CD4-positive, alpha-beta memory T cell (primary cell): ENCODE measurements at regions of chr17 and their contacts with region 1.

Region 1: DNA sequence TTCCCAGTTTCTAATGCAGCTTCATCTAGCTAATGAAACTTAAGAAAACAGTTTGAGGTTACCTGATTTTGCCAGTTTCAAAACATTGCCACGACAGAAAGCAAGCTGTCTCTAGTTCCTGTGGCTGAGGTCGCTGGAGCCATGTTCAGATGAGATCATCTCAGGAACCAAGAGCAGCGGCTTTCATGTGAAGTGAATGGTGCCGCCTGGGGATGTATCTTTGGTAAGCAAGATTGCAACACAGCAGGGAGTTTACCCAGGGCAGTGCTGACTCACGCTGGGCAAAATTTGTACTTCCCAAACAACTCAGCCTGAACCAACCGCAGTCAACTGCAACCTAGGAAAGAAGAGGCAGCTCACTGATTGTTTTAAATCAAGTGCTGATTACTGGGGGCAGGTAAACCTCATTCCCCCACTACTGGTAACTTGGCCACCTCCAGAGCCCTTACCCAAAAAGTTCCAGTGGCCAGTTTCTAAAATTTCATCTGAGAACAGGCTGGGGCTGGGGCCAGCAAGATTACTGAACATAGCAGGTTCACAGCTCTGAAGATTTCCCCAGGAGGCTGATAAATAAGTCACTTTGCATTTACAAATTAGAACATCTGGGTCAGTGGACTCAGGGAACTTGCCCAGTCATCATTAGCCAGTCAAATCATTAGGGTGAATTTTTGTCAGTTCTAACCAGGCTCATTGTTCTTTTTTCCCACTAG is at the start of gene RFFL:
- DNase-seq: peak; percentile 82 to 97 (median 85)
- H3K4me3 ChIP-seq: peak within 1 kb of the TSS in 1 of 2 donors; percentile 0
- H3K4me3 Mint-ChIP-seq: peak within 1 kb of the TSS; percentile 71 to 88 (median 82)
- H3K27ac ChIP-seq: peak within 1 kb of the TSS; percentile 62
- H3K27ac Mint-ChIP-seq: peak within 1 kb of the TSS; percentile 92 to 96 (median 94)
- H3K4me1 ChIP-seq: peaks cover 55% of the 10 kb centered on the region
- H3K4me1 Mint-ChIP-seq: peaks cover 43 to 77% (median 57%) of the 10 kb centered on the region in 4 donors
- H3K27me3 ChIP-seq: no peaks in the 10 kb centered on the region
- H3K27me3 Mint-ChIP-seq: no peaks in the 10 kb centered on the region
- total RNA-seq, gene RFFL: 72.1 to 82.3 TPM

Region 2: DNA sequence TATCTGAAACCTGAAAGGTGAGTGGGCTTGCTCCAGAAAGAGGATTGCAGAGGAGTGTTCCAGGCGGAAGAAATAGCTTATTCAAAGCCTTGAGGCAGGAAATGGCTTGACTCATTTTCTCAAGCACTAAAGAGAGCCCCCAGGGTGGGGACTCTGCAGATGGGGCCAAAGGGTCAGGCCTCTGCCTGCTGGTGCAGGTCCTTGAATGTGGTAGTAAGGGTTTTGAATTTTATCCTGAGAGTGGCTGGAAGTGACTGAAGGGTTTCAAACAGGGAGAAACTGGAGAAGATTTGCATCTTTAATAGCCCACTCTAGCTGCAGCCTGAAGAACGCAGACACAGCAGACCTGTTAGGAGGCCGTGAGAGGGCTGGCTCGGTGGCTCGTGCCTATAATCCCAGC is 246.8 kb before region 1 on chr17:
- CTCF ChIA-PET with region 1: no interaction called
- POLR2A ChIA-PET with region 1: no interaction called
- intact Hi-C with region 1: no loop called
- DNase-seq: no peak
- H3K4me3 ChIP-seq: no peak overlapping the region
- H3K4me3 Mint-ChIP-seq: no peak overlapping the region
- H3K27ac ChIP-seq: no peak overlapping the region
- H3K27ac Mint-ChIP-seq: no peak overlapping the region
- H3K4me1 ChIP-seq: no peaks in the 10 kb centered on the region
- H3K4me1 Mint-ChIP-seq: peaks cover 0 to 7% (median 6%) of the 10 kb centered on the region in 4 donors
- H3K27me3 ChIP-seq: no peaks in the 10 kb centered on the region
- H3K27me3 Mint-ChIP-seq: peaks cover 3 to 7% of the 10 kb centered on the region in 2 donors

Region 3: GRCh38 chr17:34961093-34961911 is 102.4 kb before region 1 on chr17 and contains the starts of genes CCT6B and ZNF830:
- CTCF ChIA-PET with region 1: no interaction called
- POLR2A ChIA-PET with region 1: interaction called, 8 read pairs
- intact Hi-C with region 1: loop called (anchors 1 kb)
- DNase-seq: peak; percentile 90 to 95 (median 92)
- H3K4me3 ChIP-seq: peak within 1 kb of the TSS; percentile 82 to 84
- H3K4me3 Mint-ChIP-seq: peak within 1 kb of the TSS; percentile 100
- H3K27ac ChIP-seq: peak within 1 kb of the TSS; percentile 86
- H3K27ac Mint-ChIP-seq: peak within 1 kb of the TSS; percentile 97 to 100 (median 100)
- H3K4me1 ChIP-seq: peaks cover 20% of the 10 kb centered on the region
- H3K4me1 Mint-ChIP-seq: peaks cover 17 to 38% (median 27%) of the 10 kb centered on the region in 4 donors
- H3K27me3 ChIP-seq: no peaks in the 10 kb centered on the region
- H3K27me3 Mint-ChIP-seq: peaks cover 0 to 4% of the 10 kb centered on the region in 2 donors
- total RNA-seq, gene CCT6B: 2.0 to 2.1 TPM
- total RNA-seq, gene ZNF830: 41.0 to 44.0 TPM

Region 4: DNA sequence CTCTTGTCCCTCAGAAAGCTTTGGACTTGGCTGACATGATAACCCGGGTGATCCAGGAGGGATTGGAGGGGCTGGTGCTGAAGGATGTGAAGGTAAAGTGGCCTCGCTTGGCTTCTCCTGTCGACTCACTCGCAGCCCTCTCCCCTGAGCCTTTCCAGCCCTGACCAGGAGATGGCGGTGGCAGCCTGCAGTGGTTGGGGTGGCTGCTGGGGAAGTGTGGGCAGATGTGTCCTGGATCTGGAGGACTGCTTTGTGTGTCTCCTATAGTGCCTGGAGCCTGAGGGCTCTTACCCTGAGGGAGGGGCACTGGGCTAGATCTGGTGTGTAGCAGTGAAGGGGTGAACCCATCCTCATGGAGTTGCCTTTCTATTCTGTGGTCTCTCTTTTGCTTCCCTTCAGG is 65.5 kb before region 1 on chr17:
- CTCF ChIA-PET with region 1: interaction called, 115 read pairs
- POLR2A ChIA-PET with region 1: interaction called, 34 read pairs
- intact Hi-C with region 1: loop called (anchors 1 kb)
- DNase-seq: peak; percentile 75 to 79 (median 77)
- H3K4me3 ChIP-seq: no peak overlapping the region
- H3K4me3 Mint-ChIP-seq: no peak overlapping the region
- H3K27ac ChIP-seq: no peak overlapping the region
- H3K27ac Mint-ChIP-seq: peak overlapping the region in 6 of 7 donors; percentile 20 to 88 (median 80)
- H3K4me1 ChIP-seq: peaks cover 7% of the 10 kb centered on the region
- H3K4me1 Mint-ChIP-seq: peaks cover 4 to 12% (median 5%) of the 10 kb centered on the region in 4 donors
- H3K27me3 ChIP-seq: no peaks in the 10 kb centered on the region
- H3K27me3 Mint-ChIP-seq: no peaks in the 10 kb centered on the region

Region 5: DNA sequence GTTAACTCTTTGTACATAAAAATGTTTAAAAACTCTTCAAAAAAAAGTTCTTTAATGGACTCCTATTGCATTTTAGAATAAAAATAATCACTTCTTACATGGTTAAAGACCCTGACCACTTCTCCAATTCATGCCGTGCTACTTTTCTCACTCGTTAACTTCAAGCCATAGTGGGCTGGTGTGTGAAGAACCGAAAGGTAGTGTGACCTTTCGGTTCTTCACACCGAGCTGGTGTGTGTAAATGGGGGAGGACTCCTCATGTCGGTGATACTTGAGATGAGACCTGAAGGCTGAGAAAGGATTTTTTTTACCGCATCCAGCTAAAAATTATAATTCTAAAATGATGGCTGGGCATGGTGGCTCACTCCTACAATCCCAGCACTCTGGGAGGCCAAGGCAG is 22.3 kb before region 1 on chr17:
- CTCF ChIA-PET with region 1: interaction called, 45 read pairs
- POLR2A ChIA-PET with region 1: interaction called, 179 read pairs
- intact Hi-C with region 1: loop called (anchors 2 kb)
- DNase-seq: no peak
- H3K4me3 ChIP-seq: no peak overlapping the region
- H3K4me3 Mint-ChIP-seq: peak overlapping the region in 1 of 8 donors; percentile 36
- H3K27ac ChIP-seq: no peak overlapping the region
- H3K27ac Mint-ChIP-seq: peak overlapping the region in 4 of 7 donors; percentile 17 to 81 (median 47)
- H3K4me1 ChIP-seq: peaks cover 45% of the 10 kb centered on the region
- H3K4me1 Mint-ChIP-seq: peaks cover 38 to 71% (median 54%) of the 10 kb centered on the region in 4 donors
- H3K27me3 ChIP-seq: no peaks in the 10 kb centered on the region
- H3K27me3 Mint-ChIP-seq: no peaks in the 10 kb centered on the region

Region 6: GRCh38 chr17:35052241-35052610 is 11.4 kb before region 1 on chr17:
- CTCF ChIA-PET with region 1: interaction called, 46 read pairs
- POLR2A ChIA-PET with region 1: interaction called, 179 read pairs
- intact Hi-C with region 1: loop called (anchors 1 kb)
- DNase-seq: no peak
- H3K4me3 ChIP-seq: peak overlapping the region in 1 of 2 donors; percentile 25
- H3K4me3 Mint-ChIP-seq: peak overlapping the region; percentile 4 to 86 (median 79)
- H3K27ac ChIP-seq: peak overlapping the region; percentile 60
- H3K27ac Mint-ChIP-seq: peak overlapping the region; percentile 80 to 99 (median 95)
- H3K4me1 ChIP-seq: peaks cover 94% of the 10 kb centered on the region
- H3K4me1 Mint-ChIP-seq: peaks cover 62 to 83% (median 67%) of the 10 kb centered on the region in 4 donors
- H3K27me3 ChIP-seq: no peaks in the 10 kb centered on the region
- H3K27me3 Mint-ChIP-seq: no peaks in the 10 kb centered on the region

Region 7: DNA sequence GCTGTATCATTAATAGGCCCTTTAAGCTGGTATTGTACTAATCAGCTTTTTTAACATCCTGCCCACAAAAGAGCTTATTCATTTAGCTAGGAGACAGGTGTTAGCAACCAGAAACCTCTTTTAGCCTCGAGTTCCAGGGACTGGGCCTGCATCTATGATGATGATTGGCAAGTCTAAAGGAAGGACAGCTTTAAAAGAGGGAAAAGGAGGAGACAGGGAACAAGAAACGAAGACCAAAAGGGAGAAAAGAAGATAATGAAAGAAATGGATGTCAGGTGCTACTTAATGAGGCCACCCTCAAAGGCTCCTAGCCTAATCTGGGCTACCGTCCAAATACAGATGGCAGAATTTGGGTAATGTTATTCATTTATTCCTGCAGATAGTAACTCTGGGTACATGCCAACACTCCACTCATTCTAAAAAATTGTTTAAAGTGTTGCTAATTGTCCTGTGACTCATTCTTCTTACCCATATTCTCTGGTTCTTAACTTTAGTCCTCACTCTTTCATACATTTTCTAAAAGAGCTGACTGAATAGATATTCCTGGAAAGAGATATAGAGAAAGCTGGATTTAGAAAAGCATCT is 18.5 kb after region 1 on chr17:
- CTCF ChIA-PET with region 1: interaction called, 34 read pairs
- POLR2A ChIA-PET with region 1: interaction called, 27 read pairs
- intact Hi-C with region 1: no loop called
- DNase-seq: peak in 2 of 5 donors; percentile 26 to 49
- H3K4me3 ChIP-seq: no peak overlapping the region
- H3K4me3 Mint-ChIP-seq: peak overlapping the region; percentile 58 to 83 (median 76)
- H3K27ac ChIP-seq: peak overlapping the region; percentile 52
- H3K27ac Mint-ChIP-seq: peak overlapping the region; percentile 71 to 98 (median 97)
- H3K4me1 ChIP-seq: peaks cover 82% of the 10 kb centered on the region
- H3K4me1 Mint-ChIP-seq: peaks cover 58 to 82% (median 74%) of the 10 kb centered on the region in 4 donors
- H3K27me3 ChIP-seq: no peaks in the 10 kb centered on the region
- H3K27me3 Mint-ChIP-seq: no peaks in the 10 kb centered on the region